AG04449 (cell line): ENCODE measurements at regions of chr5 and their contacts with region 1.

Region 1: DNA sequence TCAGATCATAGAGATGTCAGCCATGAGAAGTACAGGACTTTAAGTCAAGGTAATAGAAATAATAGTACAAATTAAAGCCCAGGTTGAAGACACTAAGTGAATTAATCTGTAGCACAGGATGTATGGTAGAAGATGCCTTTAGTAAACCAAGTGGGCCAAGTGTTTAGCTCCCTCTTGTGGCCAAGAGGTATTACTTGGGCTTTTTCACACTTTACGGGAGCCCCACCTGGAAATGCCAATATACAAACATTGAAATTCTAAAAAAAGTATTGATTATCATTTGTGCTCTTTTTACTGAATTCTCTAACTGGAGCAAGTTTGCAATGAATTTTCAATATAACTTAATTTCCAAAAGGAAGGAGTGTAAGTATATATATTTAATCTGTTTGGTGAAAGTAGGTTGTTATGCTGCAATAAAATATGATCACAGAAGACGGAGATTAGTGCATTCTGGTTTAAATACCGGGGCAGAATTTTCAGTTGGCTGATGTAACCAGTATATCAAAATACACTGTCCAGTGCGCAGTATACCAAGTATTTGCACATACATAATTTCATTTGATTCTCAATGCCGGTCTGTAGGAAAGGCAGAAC is 84.7 kb downstream of the PARP8 start:
- DNase-seq: no peak
- H3K4me3 ChIP-seq: no peak overlapping the region
- CTCF ChIP-seq: peak; percentile 80

Region 2: GRCh38 chr5:50606179-50606578 is 145.0 kb before region 1 on chr5:
- CTCF ChIA-PET with region 1: no interaction called
- POLR2A ChIA-PET with region 1: no interaction called
- DNase-seq: no peak
- H3K4me3 ChIP-seq: no peak overlapping the region
- CTCF ChIP-seq: no peak

Region 3: DNA sequence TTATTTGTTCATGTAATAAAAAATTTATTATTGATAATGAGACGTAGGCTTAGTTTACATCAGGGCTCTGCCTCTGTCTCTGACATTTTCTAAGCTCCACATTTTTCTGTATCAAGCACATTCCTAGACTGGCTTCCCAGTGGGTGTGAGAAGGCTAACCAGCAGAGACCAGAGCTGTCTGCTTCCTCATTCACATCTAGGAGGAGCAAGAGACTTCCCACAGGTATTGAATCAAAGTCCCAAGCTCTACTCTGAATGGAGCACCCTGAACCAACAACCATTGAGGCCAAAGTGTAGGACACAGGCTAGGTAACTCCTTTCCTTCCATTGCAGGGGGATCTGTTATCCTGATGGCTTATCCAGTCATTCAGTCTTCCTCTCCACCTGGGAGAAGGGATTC is 12.3 kb before region 1 on chr5:
- CTCF ChIA-PET with region 1: interaction called, 20 read pairs
- POLR2A ChIA-PET with region 1: no interaction called
- DNase-seq: no peak
- H3K4me3 ChIP-seq: no peak overlapping the region
- CTCF ChIP-seq: no peak

Region 4: DNA sequence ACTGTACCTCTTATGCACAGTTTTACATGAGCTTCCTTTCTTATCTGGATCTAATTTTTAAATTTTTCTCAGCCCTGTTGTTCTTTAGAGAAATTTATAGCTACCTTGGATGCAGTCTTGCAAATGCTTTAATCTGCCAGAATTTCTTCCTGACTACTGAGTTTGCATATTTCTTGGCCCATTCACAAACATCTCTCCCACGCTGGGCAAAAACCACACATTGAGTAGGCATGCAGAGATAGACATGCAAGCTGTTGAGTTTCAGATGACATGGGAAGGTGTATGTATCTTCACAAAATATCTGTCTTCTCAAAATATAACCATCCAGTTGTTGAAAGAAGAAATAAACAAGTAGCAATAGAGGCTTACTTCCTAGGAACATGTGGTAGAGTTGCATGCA is 16.4 kb after region 1 on chr5:
- CTCF ChIA-PET with region 1: interaction called, 11 read pairs
- POLR2A ChIA-PET with region 1: no interaction called
- DNase-seq: peak; percentile 37
- H3K4me3 ChIP-seq: no peak overlapping the region
- CTCF ChIP-seq: no peak